ENCODE measurements at regions of chr16 and their contacts with region 1.

Region 1: DNA sequence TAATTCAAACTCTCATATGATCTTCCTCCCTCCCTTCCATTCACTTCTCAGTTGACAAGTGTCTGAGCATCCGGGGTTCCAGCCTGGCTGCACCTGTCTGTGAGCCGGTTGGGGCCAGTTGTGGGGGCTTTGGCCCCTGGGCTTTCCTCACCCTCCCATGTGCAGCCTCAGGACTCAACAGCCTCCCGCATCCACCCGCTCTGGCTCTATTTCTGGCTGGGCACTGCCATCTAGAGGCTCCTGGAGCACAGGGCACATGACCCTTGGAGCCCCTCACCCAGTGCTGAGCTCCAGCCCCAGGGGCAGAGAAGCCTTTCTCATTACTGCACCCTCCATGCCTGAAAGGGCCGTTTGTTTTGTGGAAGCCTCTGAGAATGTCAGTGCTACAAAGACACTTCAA is 43.3 kb downstream of the HAPSTR1 start:
- DNase-seq: no peak
- ATAC-seq: peak; percentile 83
- H3K4me3 ChIP-seq: no peak overlapping the region
- H3K27ac ChIP-seq: no peak overlapping the region
- H3K4me1 ChIP-seq: peaks cover 34% of the 10 kb centered on the region
- H3K27me3 ChIP-seq: no peaks in the 10 kb centered on the region
- CTCF ChIP-seq: peak; percentile 82 to 92 (median 84)
- EP300 ChIP-seq: no peak
- POLR2A ChIP-seq: no peak
- RAD21 ChIP-seq: peak; percentile 93

Region 2: GRCh38 chr16:8567750-8568617 is 566.8 kb before region 1 on chr16:
- CTCF ChIA-PET with region 1: interaction called, 17 read pairs
- POLR2A ChIA-PET with region 1: no interaction called
- RAD21 ChIA-PET with region 1: interaction called, 8 read pairs
- SMC1A ChIA-PET with region 1: interaction called, 4 read pairs
- in situ Hi-C with region 1: loop called (anchors 5 kb)
- intact Hi-C with region 1: loop called (anchors 1 kb)
- DNase-seq: peak; percentile 66
- ATAC-seq: peak; percentile 96
- H3K4me3 ChIP-seq: no peak overlapping the region
- H3K27ac ChIP-seq: no peak overlapping the region
- H3K4me1 ChIP-seq: no peaks in the 10 kb centered on the region
- H3K27me3 ChIP-seq: no peaks in the 10 kb centered on the region; a peak in 1 of 4 replicates
- CTCF ChIP-seq: peak; percentile 88 to 99 (median 95)
- EP300 ChIP-seq: no peak
- POLR2A ChIP-seq: no peak
- RAD21 ChIP-seq: peak; percentile 96

Region 3: DNA sequence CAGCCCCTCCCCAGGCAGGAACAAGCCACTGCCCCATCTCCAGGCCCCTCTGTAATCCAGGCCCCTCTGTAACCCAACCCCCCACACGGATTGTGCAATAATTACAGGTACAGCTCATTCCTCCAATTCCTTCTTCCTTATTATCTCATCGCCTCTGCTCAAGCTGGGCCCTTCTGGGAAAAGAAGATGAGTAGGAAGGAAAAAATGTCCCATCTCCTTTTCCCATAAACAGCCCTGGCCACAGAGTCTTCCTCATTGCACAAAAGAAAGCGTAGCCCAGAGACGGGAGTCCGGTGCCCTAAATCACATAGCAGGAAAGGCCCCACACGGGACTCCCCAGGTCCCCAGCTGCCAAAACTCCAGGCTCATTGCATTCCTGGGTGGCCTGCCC is 256.2 kb before region 1 on chr16:
- CTCF ChIA-PET with region 1: interaction called, 33 read pairs
- POLR2A ChIA-PET with region 1: no interaction called
- RAD21 ChIA-PET with region 1: interaction called, 17 read pairs
- SMC1A ChIA-PET with region 1: interaction called, 8 read pairs
- in situ Hi-C with region 1: no loop called
- intact Hi-C with region 1: no loop called
- DNase-seq: no peak
- ATAC-seq: no peak
- H3K4me3 ChIP-seq: no peak overlapping the region
- H3K27ac ChIP-seq: no peak overlapping the region
- H3K4me1 ChIP-seq: peaks cover 6% of the 10 kb centered on the region
- H3K27me3 ChIP-seq: no peaks in the 10 kb centered on the region
- CTCF ChIP-seq: no peak
- EP300 ChIP-seq: no peak
- POLR2A ChIP-seq: no peak
- RAD21 ChIP-seq: no peak

Region 4: GRCh38 chr16:8936421-8936820 is 198.3 kb before region 1 on chr16:
- CTCF ChIA-PET with region 1: interaction called, 29 read pairs
- POLR2A ChIA-PET with region 1: no interaction called
- RAD21 ChIA-PET with region 1: interaction called, 14 read pairs
- SMC1A ChIA-PET with region 1: interaction called, 4 read pairs
- in situ Hi-C with region 1: loop called (anchors 5 kb)
- intact Hi-C with region 1: loop called (anchors 1 kb)
- DNase-seq: no peak
- ATAC-seq: peak; percentile 92
- H3K4me3 ChIP-seq: no peak overlapping the region
- H3K27ac ChIP-seq: no peak overlapping the region
- H3K4me1 ChIP-seq: peaks cover 50% of the 10 kb centered on the region
- H3K27me3 ChIP-seq: no peaks in the 10 kb centered on the region
- CTCF ChIP-seq: peak; percentile 70 to 84 (median 77)
- EP300 ChIP-seq: no peak
- POLR2A ChIP-seq: no peak
- RAD21 ChIP-seq: peak; percentile 85

Region 5: GRCh38 chr16:9090960-9091866 is 43.5 kb before region 1 on chr16 and contains the start of gene HAPSTR1:
- CTCF ChIA-PET with region 1: interaction called, 33 read pairs
- POLR2A ChIA-PET with region 1: interaction called, 7 read pairs
- RAD21 ChIA-PET with region 1: interaction called, 15 read pairs
- SMC1A ChIA-PET with region 1: interaction called, 9 read pairs
- in situ Hi-C with region 1: no loop called
- intact Hi-C with region 1: loop called (anchors 2 kb)
- DNase-seq: peak; percentile 99
- ATAC-seq: peak; percentile 93
- H3K4me3 ChIP-seq: peak within 1 kb of the TSS; percentile 81
- H3K27ac ChIP-seq: peak within 1 kb of the TSS; percentile 90
- H3K4me1 ChIP-seq: peaks cover 6% of the 10 kb centered on the region
- H3K27me3 ChIP-seq: no peaks in the 10 kb centered on the region
- CTCF ChIP-seq: no peak
- EP300 ChIP-seq: no peak; a peak in 1 of 4 replicates
- POLR2A ChIP-seq: peak; percentile 98
- RAD21 ChIP-seq: no peak
- polyA plus RNA-seq, gene HAPSTR1: 8.7 to 12.5 TPM

Region 6: DNA sequence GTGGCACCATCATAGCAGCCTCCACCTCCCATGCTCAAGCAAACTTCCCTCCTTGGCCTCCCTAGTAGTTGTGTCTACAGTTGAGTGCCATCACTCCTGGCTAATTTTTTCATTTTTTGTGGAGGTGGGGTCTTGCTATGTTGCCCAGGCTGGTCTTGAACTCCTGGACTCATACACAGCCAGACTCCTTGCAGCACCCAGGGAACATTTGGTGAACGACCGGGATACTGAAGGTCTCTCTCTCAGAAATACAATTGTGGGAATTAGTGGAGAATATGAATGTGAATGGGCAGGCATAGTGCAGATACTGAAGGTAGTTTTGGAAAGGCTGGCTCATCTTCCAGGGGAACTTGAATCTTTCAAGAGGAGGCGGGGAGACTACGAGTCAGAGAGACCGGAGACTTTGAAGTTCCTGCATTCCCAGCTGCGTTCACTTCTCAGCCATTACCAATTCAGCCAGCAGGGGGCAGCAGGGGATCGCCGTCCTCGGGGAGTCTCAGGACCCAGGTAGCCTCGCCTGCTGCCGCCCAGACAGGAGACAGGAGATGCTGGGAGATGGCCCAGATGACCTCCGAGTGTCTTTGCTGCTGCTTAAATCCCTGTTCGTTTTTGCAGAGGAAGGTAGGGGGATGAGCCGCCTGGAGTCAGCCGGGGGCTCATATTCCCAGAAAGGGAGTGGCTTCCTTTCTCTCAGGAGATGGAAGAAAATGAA is 25.3 kb after region 1 on chr16:
- CTCF ChIA-PET with region 1: interaction called, 12 read pairs
- POLR2A ChIA-PET with region 1: no interaction called
- RAD21 ChIA-PET with region 1: no interaction called
- SMC1A ChIA-PET with region 1: interaction called, 4 read pairs
- in situ Hi-C with region 1: no loop called
- intact Hi-C with region 1: no loop called
- DNase-seq: peak; percentile 4
- ATAC-seq: peak; percentile 91
- H3K4me3 ChIP-seq: no peak overlapping the region
- H3K27ac ChIP-seq: no peak overlapping the region
- H3K4me1 ChIP-seq: no peaks in the 10 kb centered on the region
- H3K27me3 ChIP-seq: no peaks in the 10 kb centered on the region; a peak in 1 of 4 replicates
- CTCF ChIP-seq: peak; percentile 73 to 81 (median 79)
- EP300 ChIP-seq: no peak
- POLR2A ChIP-seq: no peak
- RAD21 ChIP-seq: peak; percentile 80

Region 7: DNA sequence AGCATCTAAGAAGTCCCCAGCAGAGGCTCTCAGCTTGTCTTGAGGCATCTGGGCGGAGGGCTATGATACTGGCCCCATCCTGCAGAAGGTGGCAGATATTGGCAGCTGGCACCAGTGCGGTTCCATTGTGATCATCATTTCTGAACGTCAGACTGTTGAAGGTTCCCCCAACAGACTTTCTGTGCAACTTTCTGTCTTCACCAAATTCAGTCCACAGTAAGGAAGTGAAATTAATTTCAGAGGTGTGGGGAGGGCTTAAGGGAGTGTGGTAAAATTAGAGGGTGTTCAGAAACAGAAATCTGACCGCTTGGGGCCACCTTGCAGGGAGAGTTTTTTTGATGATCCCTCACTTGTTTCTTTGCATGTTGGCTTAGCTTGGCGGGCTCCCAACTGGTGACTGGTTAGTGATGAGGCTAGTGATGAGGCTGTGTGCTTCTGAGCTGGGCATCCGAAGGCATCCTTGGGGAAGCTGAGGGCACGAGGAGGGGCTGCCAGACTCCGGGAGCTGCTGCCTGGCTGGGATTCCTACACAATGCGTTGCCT is 1742.1 kb after region 1 on chr16 and contains the start of gene CIITA:
- CTCF ChIA-PET with region 1: interaction called, 3 read pairs
- POLR2A ChIA-PET with region 1: no interaction called
- RAD21 ChIA-PET with region 1: no interaction called
- SMC1A ChIA-PET with region 1: no interaction called
- in situ Hi-C with region 1: loop called (anchors 25 kb)
- intact Hi-C with region 1: no loop called
- DNase-seq: peak; percentile 97
- ATAC-seq: peak; percentile 56
- H3K4me3 ChIP-seq: peak within 1 kb of the TSS; percentile 78
- H3K27ac ChIP-seq: peak within 1 kb of the TSS; percentile 94
- H3K4me1 ChIP-seq: peaks cover 40% of the 10 kb centered on the region
- H3K27me3 ChIP-seq: no peaks in the 10 kb centered on the region
- CTCF ChIP-seq: no peak
- EP300 ChIP-seq: peak; percentile 28 to 85; a peak in 3 of 4 replicates
- POLR2A ChIP-seq: peak; percentile 86
- RAD21 ChIP-seq: peak; percentile 32; the same call in 1 of the 2 replicates
- polyA plus RNA-seq, gene CIITA: 11.5 to 12.5 TPM

Measured in GM12878 (cell line).